ENCODE measurements at regions of chr1 and their contacts with region 1.

Region 1: GRCh38 chr1:31745096-31745945 is 18.8 kb downstream of the ADGRB2 start:
- DNase-seq: no peak
- ATAC-seq: peak; percentile 92
- H3K4me3 ChIP-seq: no peak overlapping the region
- H3K27ac ChIP-seq: no peak overlapping the region
- H3K4me1 ChIP-seq: peaks cover 17% of the 10 kb centered on the region
- H3K27me3 ChIP-seq: no peaks in the 10 kb centered on the region; a peak in 1 of 4 replicates
- CTCF ChIP-seq: peak; percentile 69 to 87 (median 81)
- EP300 ChIP-seq: no peak
- POLR2A ChIP-seq: no peak
- RAD21 ChIP-seq: peak; percentile 71

Region 2: DNA sequence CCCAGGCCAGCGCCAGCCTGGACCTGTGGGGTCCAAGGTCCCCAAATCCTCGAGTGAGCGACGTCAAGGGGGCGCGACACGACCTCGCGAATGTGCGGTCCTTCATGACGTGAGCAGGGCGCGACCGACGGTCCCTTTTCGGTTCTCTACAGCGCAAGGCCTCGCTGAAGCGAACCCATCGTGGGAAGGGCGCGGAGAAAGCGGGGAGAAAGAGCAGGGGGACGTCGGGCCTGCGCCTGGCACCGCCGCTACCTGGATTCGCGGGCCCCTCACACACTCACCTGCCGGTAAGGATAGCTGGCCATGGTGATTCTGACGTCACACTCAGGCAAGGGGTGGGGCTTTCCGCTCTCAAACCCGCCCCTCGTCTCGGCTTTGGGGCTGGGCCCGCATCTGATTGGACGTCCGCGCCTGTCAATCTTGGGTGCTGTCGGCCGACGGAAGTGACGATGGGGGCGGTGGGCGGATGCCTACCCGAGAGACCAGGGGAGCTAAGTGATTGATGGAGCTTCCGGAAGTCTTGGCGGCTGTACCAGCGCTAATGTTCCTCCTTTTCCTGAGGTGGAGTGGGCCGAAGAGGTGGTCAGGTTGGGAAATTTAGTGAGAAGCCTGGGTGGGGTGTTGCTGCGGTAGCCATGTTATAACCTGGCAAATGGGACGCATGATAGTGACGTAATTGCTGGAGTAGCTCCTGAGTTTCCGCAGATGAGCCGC is 100.6 kb before region 1 on chr1 and contains the start of gene PEF1:
- CTCF ChIA-PET with region 1: interaction called, 14 read pairs
- POLR2A ChIA-PET with region 1: no interaction called
- RAD21 ChIA-PET with region 1: interaction called, 3 read pairs
- SMC1A ChIA-PET with region 1: interaction called, 3 read pairs
- in situ Hi-C with region 1: no loop called
- intact Hi-C with region 1: no loop called
- DNase-seq: peak; percentile 90
- ATAC-seq: peak; percentile 85
- H3K4me3 ChIP-seq: peak within 1 kb of the TSS; percentile 78
- H3K27ac ChIP-seq: peak within 1 kb of the TSS; percentile 92
- H3K4me1 ChIP-seq: peaks cover 5% of the 10 kb centered on the region
- H3K27me3 ChIP-seq: no peaks in the 10 kb centered on the region
- CTCF ChIP-seq: no peak
- EP300 ChIP-seq: no peak
- POLR2A ChIP-seq: peak; percentile 90
- RAD21 ChIP-seq: no peak
- polyA plus RNA-seq, gene PEF1: 27.1 to 40.4 TPM

Region 3: DNA sequence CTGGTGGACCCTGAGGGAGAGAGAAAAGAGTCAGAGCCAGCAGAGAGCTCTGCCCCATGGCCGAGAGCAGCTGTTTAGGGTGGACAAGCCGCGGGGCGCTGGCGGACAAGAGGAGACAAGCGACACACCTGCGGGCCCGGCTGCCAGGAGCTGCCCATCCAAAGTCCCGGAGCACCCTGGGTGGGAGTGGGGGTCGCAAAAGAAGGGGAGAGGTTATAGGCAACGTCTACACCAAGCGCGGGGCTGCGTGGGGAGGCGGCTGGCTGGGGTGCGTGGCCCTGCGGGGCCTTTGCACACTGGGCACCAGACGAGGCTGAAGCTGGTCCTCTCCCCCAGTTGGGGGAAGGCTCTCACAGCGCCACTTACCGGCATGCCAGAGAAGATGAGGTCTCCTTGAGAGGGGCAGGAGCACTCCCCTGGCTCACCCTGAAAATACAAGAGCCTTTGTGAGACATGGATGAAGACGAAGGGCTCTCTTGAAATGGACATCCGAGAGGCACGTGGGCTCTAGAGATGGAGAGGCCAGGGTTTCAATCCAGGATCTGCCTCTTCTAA is 65.6 kb before region 1 on chr1:
- CTCF ChIA-PET with region 1: interaction called, 12 read pairs
- POLR2A ChIA-PET with region 1: no interaction called
- RAD21 ChIA-PET with region 1: no interaction called
- SMC1A ChIA-PET with region 1: no interaction called
- in situ Hi-C with region 1: no loop called
- intact Hi-C with region 1: no loop called
- DNase-seq: no peak
- ATAC-seq: no peak
- H3K4me3 ChIP-seq: no peak overlapping the region
- H3K27ac ChIP-seq: no peak overlapping the region
- H3K4me1 ChIP-seq: no peaks in the 10 kb centered on the region
- H3K27me3 ChIP-seq: peaks cover under 1% of the 10 kb centered on the region in 2 experiments; a peak in 3 of 4 replicates
- CTCF ChIP-seq: no peak
- EP300 ChIP-seq: no peak
- POLR2A ChIP-seq: no peak
- RAD21 ChIP-seq: no peak

Region 4: GRCh38 chr1:31715087-31715872 is 30.0 kb before region 1 on chr1:
- CTCF ChIA-PET with region 1: interaction called, 70 read pairs
- POLR2A ChIA-PET with region 1: no interaction called
- RAD21 ChIA-PET with region 1: interaction called, 17 read pairs
- SMC1A ChIA-PET with region 1: interaction called, 12 read pairs
- in situ Hi-C with region 1: no loop called
- intact Hi-C with region 1: no loop called
- DNase-seq: no peak
- ATAC-seq: peak; percentile 98
- H3K4me3 ChIP-seq: peak overlapping the region; percentile 38; the same call in 1 of the 2 replicates
- H3K27ac ChIP-seq: no peak overlapping the region
- H3K4me1 ChIP-seq: peaks cover 4% of the 10 kb centered on the region; the same call in 1 of the 2 replicates
- H3K27me3 ChIP-seq: peaks cover 0 to 6% of the 10 kb centered on the region in 2 experiments; a peak in 1 of 4 replicates
- CTCF ChIP-seq: peak; percentile 54 to 82 (median 64)
- EP300 ChIP-seq: no peak
- POLR2A ChIP-seq: no peak
- RAD21 ChIP-seq: no peak

Region 5: GRCh38 chr1:31762726-31763670 is 17.7 kb after region 1 on chr1:
- CTCF ChIA-PET with region 1: interaction called, 18 read pairs
- POLR2A ChIA-PET with region 1: no interaction called
- RAD21 ChIA-PET with region 1: interaction called, 3 read pairs
- SMC1A ChIA-PET with region 1: interaction called, 4 read pairs
- in situ Hi-C with region 1: no loop called
- intact Hi-C with region 1: no loop called
- DNase-seq: no peak
- ATAC-seq: peak; percentile 62
- H3K4me3 ChIP-seq: peak overlapping the region; percentile 32; the same call in 1 of the 2 replicates
- H3K27ac ChIP-seq: no peak overlapping the region
- H3K4me1 ChIP-seq: peaks cover 8% of the 10 kb centered on the region
- H3K27me3 ChIP-seq: peaks cover 20 to 26% of the 10 kb centered on the region in 2 experiments
- CTCF ChIP-seq: peak in 2 of 3 experiments; percentile 59 to 65; a peak in 4 of 6 replicates
- EP300 ChIP-seq: no peak
- POLR2A ChIP-seq: no peak
- RAD21 ChIP-seq: 0 out of 2 replicates have a peak, but pooled peaks have one; percentile 22

Region 6: DNA sequence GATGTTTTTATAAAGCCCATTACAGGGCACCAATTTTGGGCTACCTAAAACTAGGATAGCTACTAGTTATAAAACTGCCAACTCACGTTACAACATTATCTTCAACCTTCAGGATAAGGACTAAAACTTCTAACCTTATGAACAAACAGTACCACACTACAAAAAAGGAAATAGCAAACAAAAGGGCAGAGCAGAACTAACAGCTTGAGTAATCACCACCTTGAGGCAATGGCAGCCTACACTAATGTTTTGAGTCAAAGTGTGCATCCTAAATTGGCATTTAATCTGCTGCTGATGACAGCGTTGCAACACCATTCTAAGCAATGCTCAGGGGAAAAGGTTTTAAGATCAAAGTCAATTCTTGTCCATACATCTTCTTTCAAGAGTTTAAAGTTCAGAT is 165.6 kb after region 1 on chr1:
- CTCF ChIA-PET with region 1: no interaction called
- POLR2A ChIA-PET with region 1: no interaction called
- RAD21 ChIA-PET with region 1: no interaction called
- SMC1A ChIA-PET with region 1: no interaction called
- in situ Hi-C with region 1: no loop called
- intact Hi-C with region 1: no loop called
- DNase-seq: peak; percentile 64
- ATAC-seq: peak; percentile 72
- H3K4me3 ChIP-seq: no peak overlapping the region
- H3K27ac ChIP-seq: no peak overlapping the region
- H3K4me1 ChIP-seq: peaks cover 29% of the 10 kb centered on the region
- H3K27me3 ChIP-seq: no peaks in the 10 kb centered on the region
- CTCF ChIP-seq: no peak
- EP300 ChIP-seq: peak in 1 of 2 experiments; percentile 73; a peak in 2 of 4 replicates
- POLR2A ChIP-seq: no peak
- RAD21 ChIP-seq: no peak